IMR-90 (cell line): ENCODE measurements at regions of chr1 and their contacts with region 1.

Region 1: GRCh38 chr1:179840107-179840506 is 37.5 kb downstream of the TOR1AIP2 start:
- DNase-seq: no peak
- ATAC-seq: no peak
- H3K4me3 ChIP-seq: no peak overlapping the region
- H3K27ac ChIP-seq: no peak overlapping the region
- H3K4me1 ChIP-seq: peaks cover 2% of the 10 kb centered on the region; the same call in 1 of the 2 replicates
- H3K27me3 ChIP-seq: no peaks in the 10 kb centered on the region
- CTCF ChIP-seq: no peak
- POLR2A ChIP-seq: no peak
- RAD21 ChIP-seq: no peak

Region 2: DNA sequence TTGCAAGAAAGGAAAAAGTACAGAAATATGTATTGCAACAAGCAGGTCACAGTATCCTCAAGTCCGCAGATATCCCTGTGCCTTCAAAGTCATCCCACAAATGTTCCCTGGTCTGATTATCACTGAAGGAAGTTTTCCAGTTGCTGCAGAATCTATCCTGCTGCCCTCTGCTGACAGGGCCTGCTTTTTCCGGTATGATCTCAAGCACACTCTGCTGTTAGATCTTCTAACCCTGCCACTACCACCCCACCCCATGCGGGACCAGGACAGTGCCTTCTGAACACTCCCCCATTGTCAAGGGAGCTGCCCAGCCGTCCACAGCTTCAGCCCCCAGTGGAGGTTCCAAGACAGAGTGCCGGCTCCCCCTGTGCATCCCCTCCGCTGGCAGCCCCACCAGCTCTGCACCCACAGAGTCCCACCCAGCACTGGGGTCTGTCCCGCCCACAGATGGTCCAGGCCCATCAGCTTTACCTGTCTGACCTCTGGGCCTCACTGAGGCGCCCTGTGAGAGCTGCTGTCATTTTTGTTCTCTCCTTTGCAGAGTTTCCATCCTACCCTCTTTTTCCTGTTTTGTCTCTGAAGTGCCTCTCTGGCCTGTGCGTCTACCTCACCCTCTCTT is 69.1 kb before region 1 on chr1:
- CTCF ChIA-PET with region 1: no interaction called
- POLR2A ChIA-PET with region 1: no interaction called
- dilution Hi-C with region 1: no loop called
- in situ Hi-C with region 1: no loop called
- intact Hi-C with region 1: no loop called
- DNase-seq: no peak
- ATAC-seq: peak; percentile 49
- H3K4me3 ChIP-seq: no peak overlapping the region
- H3K27ac ChIP-seq: no peak overlapping the region
- H3K4me1 ChIP-seq: no peaks in the 10 kb centered on the region
- H3K27me3 ChIP-seq: peaks cover 16% of the 10 kb centered on the region
- CTCF ChIP-seq: peak; percentile 11; the same call in 1 of the 2 replicates
- POLR2A ChIP-seq: no peak
- RAD21 ChIP-seq: no peak

Region 3: GRCh38 chr1:179921981-179922872 is 82.1 kb after region 1 on chr1:
- CTCF ChIA-PET with region 1: no interaction called
- POLR2A ChIA-PET with region 1: no interaction called
- dilution Hi-C with region 1: no loop called
- in situ Hi-C with region 1: no loop called
- intact Hi-C with region 1: loop called (anchors 5 kb)
- DNase-seq: peak; percentile 4
- ATAC-seq: no peak
- H3K4me3 ChIP-seq: no peak overlapping the region
- H3K27ac ChIP-seq: no peak overlapping the region
- H3K4me1 ChIP-seq: peaks cover 3% of the 10 kb centered on the region
- H3K27me3 ChIP-seq: no peaks in the 10 kb centered on the region
- CTCF ChIP-seq: no peak
- POLR2A ChIP-seq: no peak
- RAD21 ChIP-seq: no peak

Region 4: DNA sequence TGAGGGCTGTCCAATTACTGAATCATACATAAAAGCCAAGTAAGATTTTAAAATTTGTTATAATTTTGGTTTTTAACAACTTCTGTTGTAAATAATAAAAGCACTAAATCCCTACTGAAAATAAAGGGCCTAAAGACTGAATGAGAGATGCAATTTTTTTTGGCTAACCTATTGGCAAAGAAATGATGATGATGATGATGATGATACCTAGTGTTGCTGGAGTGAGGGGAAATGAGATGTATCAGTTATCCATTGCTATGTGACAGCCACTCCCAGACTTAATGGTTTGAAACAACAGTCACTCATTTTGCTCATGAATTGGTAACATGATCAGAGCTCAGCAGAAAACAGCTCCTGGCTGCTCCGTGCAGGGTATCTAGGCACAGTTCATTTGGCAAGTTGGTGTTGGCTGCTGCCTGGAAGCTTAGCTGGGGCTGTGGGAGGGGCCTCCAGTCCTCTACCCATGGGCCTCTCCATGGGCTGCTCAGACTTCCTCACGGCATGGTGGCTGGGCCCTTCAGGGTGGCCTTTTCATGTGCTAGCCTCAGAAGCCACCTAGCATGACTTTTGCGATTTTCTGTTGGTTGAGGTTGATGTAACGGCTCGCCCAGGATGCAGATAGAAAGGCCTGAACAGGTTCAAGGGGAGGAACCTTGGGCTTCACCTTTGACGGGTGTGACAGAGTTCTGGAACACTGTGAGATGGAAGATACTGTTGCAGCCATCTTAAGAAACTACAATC is 364.0 kb after region 1 on chr1:
- CTCF ChIA-PET with region 1: no interaction called
- POLR2A ChIA-PET with region 1: interaction called, 10 read pairs
- dilution Hi-C with region 1: no loop called
- in situ Hi-C with region 1: no loop called
- intact Hi-C with region 1: no loop called
- DNase-seq: no peak
- ATAC-seq: peak; percentile 8
- H3K4me3 ChIP-seq: no peak overlapping the region
- H3K27ac ChIP-seq: no peak overlapping the region
- H3K4me1 ChIP-seq: no peaks in the 10 kb centered on the region; the same call in 1 of the 2 replicates
- H3K27me3 ChIP-seq: no peaks in the 10 kb centered on the region
- CTCF ChIP-seq: no peak
- POLR2A ChIP-seq: no peak
- RAD21 ChIP-seq: no peak